A549 (cell line): ENCODE measurements at regions of chr14 and their contacts with region 1.

Region 1: GRCh38 chr14:69398053-69398817 is at the starts of genes ERH and SLC39A9:
- DNase-seq: peak; percentile 96 to 98
- ATAC-seq: peak; percentile 96 to 98
- H3K4me3 ChIP-seq: peak within 1 kb of the TSS; percentile 92
- H3K27ac ChIP-seq: peak within 1 kb of the TSS; percentile 96 to 97
- H3K4me1 ChIP-seq: peaks cover 38% of the 10 kb centered on the region
- CTCF ChIP-seq: no peak
- EP300 ChIP-seq: no peak
- POLR2A ChIP-seq: peak; percentile 85
- RAD21 ChIP-seq: no peak
- polyA plus RNA-seq, gene ERH: 302 and 377 TPM in 2 replicates
- polyA plus RNA-seq, gene SLC39A9: 116 and 125 TPM in 2 replicates

Region 2: GRCh38 chr14:69191340-69192111 is 206.7 kb before region 1 on chr14 and contains the start of gene EXD2:
- CTCF ChIA-PET with region 1: no interaction called
- POLR2A ChIA-PET with region 1: interaction called, 10 read pairs
- DNase-seq: peak; percentile 94 to 97
- ATAC-seq: peak; percentile 99
- H3K4me3 ChIP-seq: peak within 1 kb of the TSS; percentile 70
- H3K27ac ChIP-seq: peak within 1 kb of the TSS; percentile 87 to 94
- H3K4me1 ChIP-seq: peaks cover 6% of the 10 kb centered on the region; the same call in 2 of the 3 replicates
- CTCF ChIP-seq: no peak
- EP300 ChIP-seq: no peak
- POLR2A ChIP-seq: peak; percentile 22
- RAD21 ChIP-seq: no peak; a peak in 1 of 5 replicates
- polyA plus RNA-seq, gene EXD2: 22.1 and 22.3 TPM in 2 replicates

Region 3: DNA sequence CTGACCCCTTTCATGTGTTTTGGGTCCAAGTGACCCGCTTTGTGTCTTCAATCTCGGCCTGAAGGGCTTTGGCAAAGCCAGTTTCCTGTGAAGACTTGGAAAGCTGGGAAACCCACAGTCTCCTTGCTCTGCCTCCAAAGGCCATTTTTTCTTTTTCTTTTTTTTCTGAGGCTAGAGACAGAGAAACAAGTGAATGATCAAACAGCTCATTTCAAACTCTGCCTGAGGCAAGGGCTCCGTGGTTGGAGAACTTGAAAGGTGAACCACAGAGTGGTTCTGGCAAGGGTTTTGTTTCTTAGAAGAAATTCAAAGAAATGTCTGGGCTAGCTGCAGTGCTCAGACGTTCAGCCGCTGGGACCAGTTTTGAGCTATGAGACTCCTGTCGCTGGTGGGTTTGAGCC is 62.9 kb before region 1 on chr14:
- CTCF ChIA-PET with region 1: no interaction called
- POLR2A ChIA-PET with region 1: no interaction called
- DNase-seq: no peak
- ATAC-seq: no peak
- H3K4me3 ChIP-seq: no peak overlapping the region
- H3K27ac ChIP-seq: no peak overlapping the region
- H3K4me1 ChIP-seq: no peaks in the 10 kb centered on the region
- CTCF ChIP-seq: no peak
- EP300 ChIP-seq: no peak
- POLR2A ChIP-seq: no peak
- RAD21 ChIP-seq: no peak